ENCODE measurements at regions of chr15 and their contacts with region 1.

Region 1: GRCh38 chr15:64667736-64668161 is 107.6 kb downstream of the RBPMS2 start:
- DNase-seq: no peak
- H3K4me3 ChIP-seq: no peak overlapping the region
- H3K4me3 Mint-ChIP-seq: no peak overlapping the region
- H3K27ac Mint-ChIP-seq: no peak overlapping the region
- H3K4me1 ChIP-seq: no peaks in the 10 kb centered on the region
- H3K4me1 Mint-ChIP-seq: no peaks in the 10 kb centered on the region
- H3K27me3 ChIP-seq: no peaks in the 10 kb centered on the region
- H3K27me3 Mint-ChIP-seq: no peaks in the 10 kb centered on the region
- CTCF ChIP-seq: no peak

Region 2: GRCh38 chr15:64333986-64334929 is 333.5 kb before region 1 on chr15:
- CTCF ChIA-PET with region 1: no interaction called
- POLR2A ChIA-PET with region 1: interaction called, 10 read pairs
- intact Hi-C with region 1: no loop called
- DNase-seq: peak in 1 of 2 experiments; percentile 26
- H3K4me3 ChIP-seq: no peak overlapping the region
- H3K4me3 Mint-ChIP-seq: no peak overlapping the region
- H3K27ac Mint-ChIP-seq: no peak overlapping the region
- H3K4me1 ChIP-seq: no peaks in the 10 kb centered on the region
- H3K4me1 Mint-ChIP-seq: no peaks in the 10 kb centered on the region
- H3K27me3 ChIP-seq: no peaks in the 10 kb centered on the region
- H3K27me3 Mint-ChIP-seq: no peaks in the 10 kb centered on the region
- CTCF ChIP-seq: no peak